ENCODE measurements at regions of chr10 and their contacts with region 1.

Region 1: DNA sequence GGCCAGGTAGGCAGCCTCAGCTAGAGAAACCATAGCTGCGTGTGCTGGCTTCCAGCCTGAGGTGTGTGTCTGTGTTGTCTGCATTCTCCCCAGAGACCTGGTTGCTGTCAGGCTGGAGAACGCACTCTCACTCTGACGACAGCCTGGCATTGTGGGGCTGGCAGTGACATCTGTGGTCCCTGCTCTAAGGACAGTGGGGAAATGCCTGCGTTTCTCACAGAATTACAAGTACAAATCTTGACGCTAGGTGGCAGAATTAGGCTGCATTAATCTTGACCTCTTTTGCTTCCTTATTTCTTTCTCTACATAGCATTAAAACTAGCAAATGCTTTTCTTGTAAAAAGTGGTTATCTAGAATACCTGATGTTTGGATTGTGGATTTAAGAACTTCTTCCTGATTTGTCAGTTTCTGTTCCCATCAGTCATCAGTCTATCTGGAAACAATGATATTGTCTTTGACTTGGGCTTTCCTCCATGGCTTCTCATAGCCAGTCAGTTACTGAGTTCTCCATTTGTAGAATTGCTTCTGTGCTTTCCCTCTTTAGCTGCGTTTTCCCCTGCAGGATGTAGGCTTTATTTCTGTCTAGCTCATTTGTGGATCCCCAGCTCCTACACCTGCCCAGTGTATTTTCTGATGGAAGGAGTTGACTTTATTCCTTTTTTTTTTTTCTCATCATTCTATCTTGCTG is 86.0 kb downstream of the FANK1 start:
- H3K4me3 Mint-ChIP-seq: no peak overlapping the region
- H3K27ac Mint-ChIP-seq: peak overlapping the region; percentile 62
- H3K4me1 Mint-ChIP-seq: peaks cover 42% of the 10 kb centered on the region
- H3K27me3 Mint-ChIP-seq: peaks cover 3% of the 10 kb centered on the region

Region 2: GRCh38 chr10:124547647-124548168 is 1434.7 kb before region 1 on chr10:
- intact Hi-C with region 1: no loop called
- H3K4me3 Mint-ChIP-seq: no peak overlapping the region
- H3K27ac Mint-ChIP-seq: peak overlapping the region; percentile 9
- H3K4me1 Mint-ChIP-seq: peaks cover 40% of the 10 kb centered on the region
- H3K27me3 Mint-ChIP-seq: peaks cover 2% of the 10 kb centered on the region

Region 3: GRCh38 chr10:125940515-125940914 is 41.9 kb before region 1 on chr10:
- intact Hi-C with region 1: no loop called
- H3K4me3 Mint-ChIP-seq: no peak overlapping the region
- H3K27ac Mint-ChIP-seq: no peak overlapping the region
- H3K4me1 Mint-ChIP-seq: no peaks in the 10 kb centered on the region
- H3K27me3 Mint-ChIP-seq: no peaks in the 10 kb centered on the region

Region 4: DNA sequence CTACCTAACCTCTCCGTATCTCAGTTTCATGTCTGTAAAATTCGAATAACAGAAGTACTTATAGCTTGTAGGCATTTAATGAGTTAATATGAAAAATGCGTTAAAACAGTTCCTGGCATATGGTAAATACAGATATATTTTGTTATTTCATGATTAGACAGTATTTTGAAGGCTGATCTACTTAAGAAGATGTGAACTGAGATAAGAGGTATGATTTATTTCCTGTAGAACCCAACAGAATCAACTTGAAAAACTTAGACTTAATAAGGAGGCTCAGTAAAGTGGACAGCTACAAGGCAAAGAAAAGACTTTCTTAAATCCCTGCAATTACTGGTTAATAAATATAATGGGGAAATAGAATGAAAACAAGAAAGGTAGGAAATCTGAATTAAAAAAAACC is 17.3 kb after region 1 on chr10:
- intact Hi-C with region 1: no loop called
- H3K4me3 Mint-ChIP-seq: no peak overlapping the region
- H3K27ac Mint-ChIP-seq: no peak overlapping the region
- H3K4me1 Mint-ChIP-seq: no peaks in the 10 kb centered on the region
- H3K27me3 Mint-ChIP-seq: no peaks in the 10 kb centered on the region

Region 5: GRCh38 chr10:126153711-126154628 is 171.6 kb after region 1 on chr10:
- intact Hi-C with region 1: loop called (anchors 10 kb)
- H3K4me3 Mint-ChIP-seq: no peak overlapping the region
- H3K27ac Mint-ChIP-seq: no peak overlapping the region
- H3K4me1 Mint-ChIP-seq: no peaks in the 10 kb centered on the region
- H3K27me3 Mint-ChIP-seq: peaks cover 14% of the 10 kb centered on the region

Region 6: GRCh38 chr10:126387023-126387921 is 404.9 kb after region 1 on chr10:
- intact Hi-C with region 1: loop called (anchors 1 kb)
- H3K4me3 Mint-ChIP-seq: peak overlapping the region; percentile 68
- H3K27ac Mint-ChIP-seq: peak overlapping the region; percentile 56
- H3K4me1 Mint-ChIP-seq: peaks cover 8% of the 10 kb centered on the region
- H3K27me3 Mint-ChIP-seq: peaks cover 52% of the 10 kb centered on the region

Region 7: DNA sequence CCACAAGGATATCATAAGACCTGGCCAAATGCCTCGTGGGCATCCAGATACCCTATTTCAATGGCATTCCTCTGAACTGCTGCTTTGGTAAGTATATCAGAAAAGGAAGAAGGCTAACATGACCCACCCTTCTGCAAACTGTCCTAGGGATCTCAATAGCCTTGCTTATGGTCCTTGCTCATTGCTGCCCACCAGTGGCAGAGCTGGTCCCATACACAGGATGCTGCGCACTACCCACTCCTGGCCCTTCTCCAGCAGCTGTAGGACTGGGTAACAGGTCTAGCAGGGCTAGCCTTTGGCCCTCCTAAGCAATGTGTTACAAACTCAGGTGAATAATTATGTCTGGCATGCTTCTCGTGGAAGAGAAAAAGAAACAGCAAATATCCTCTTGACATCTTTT is 615.6 kb after region 1 on chr10:
- intact Hi-C with region 1: loop called (anchors 5 kb)
- H3K4me3 Mint-ChIP-seq: no peak overlapping the region
- H3K27ac Mint-ChIP-seq: no peak overlapping the region
- H3K4me1 Mint-ChIP-seq: no peaks in the 10 kb centered on the region
- H3K27me3 Mint-ChIP-seq: no peaks in the 10 kb centered on the region